ENCODE measurements at regions of chr17 and their contacts with region 1.

Region 1: GRCh38 chr17:7351665-7352501 is at the start of gene KCTD11:
- DNase-seq: peak; percentile 76
- H3K4me3 Mint-ChIP-seq: peak within 1 kb of the TSS; percentile 64
- H3K27ac Mint-ChIP-seq: peak within 1 kb of the TSS; percentile 84
- H3K4me1 Mint-ChIP-seq: peaks cover 70% of the 10 kb centered on the region
- H3K27me3 Mint-ChIP-seq: no peaks in the 10 kb centered on the region
- total RNA-seq, gene KCTD11: 11.2 to 12.5 TPM

Region 2: DNA sequence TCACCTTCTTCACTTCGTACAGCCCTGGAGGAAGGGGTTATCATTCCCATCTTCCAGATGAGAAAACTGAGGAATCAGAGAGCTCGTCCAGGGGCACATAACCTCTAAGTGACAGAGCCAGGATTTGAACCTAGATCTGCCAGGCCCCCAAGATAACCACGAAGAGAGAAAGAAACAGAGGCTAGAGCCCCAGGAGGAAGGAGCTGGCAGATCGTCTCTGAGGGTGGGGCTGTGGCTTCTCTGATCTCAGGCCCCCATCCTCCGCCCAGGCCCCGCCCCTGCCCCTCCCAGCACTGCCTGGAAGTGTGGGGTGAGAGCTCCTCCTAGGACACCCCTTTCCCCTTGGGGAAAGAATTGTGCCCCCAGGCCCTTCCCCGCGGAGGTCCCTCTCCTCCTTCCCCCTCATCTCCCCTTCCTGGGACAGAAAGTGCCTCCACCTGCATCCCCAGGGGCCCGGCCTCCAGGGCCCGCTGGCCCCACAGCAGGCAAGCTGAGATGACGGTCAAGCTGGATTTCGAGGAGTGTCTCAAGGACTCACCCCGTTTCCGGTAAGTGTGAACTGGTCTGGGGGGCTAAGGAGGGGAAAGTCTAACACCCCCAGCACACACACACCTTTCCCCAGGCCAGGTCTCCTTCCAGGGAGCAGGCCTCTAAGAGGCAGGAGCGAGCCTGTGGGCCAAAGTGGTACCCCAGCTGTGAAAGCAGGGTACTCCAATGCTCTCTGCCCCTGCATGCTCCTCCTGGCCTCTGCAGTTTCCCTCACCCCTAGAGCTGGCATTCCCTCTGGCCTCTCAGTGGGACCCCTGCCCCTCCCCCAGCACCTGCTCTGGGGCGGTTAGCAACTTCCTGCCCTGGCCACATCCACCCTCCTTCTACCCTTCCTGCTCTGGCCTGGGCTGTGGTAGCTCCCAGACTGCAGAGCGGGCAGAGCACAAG is 15.4 kb before region 1 on chr17 and contains the start of gene ACAP1:
- CTCF ChIA-PET with region 1: interaction called, 29 read pairs
- POLR2A ChIA-PET with region 1: interaction called, 4 read pairs
- DNase-seq: peak; percentile 94
- H3K4me3 Mint-ChIP-seq: peak within 1 kb of the TSS; percentile 91
- H3K27ac Mint-ChIP-seq: peak within 1 kb of the TSS; percentile 97
- H3K4me1 Mint-ChIP-seq: peaks cover 66% of the 10 kb centered on the region
- H3K27me3 Mint-ChIP-seq: no peaks in the 10 kb centered on the region
- total RNA-seq, gene ACAP1: 727 to 775 TPM

Region 3: GRCh38 chr17:7380321-7380720 is 28.4 kb after region 1 on chr17:
- CTCF ChIA-PET with region 1: interaction called, 17 read pairs
- POLR2A ChIA-PET with region 1: no interaction called
- DNase-seq: no peak
- H3K4me3 Mint-ChIP-seq: no peak overlapping the region
- H3K27ac Mint-ChIP-seq: no peak overlapping the region
- H3K4me1 Mint-ChIP-seq: peaks cover 21% of the 10 kb centered on the region
- H3K27me3 Mint-ChIP-seq: peaks cover 41% of the 10 kb centered on the region

Region 4: GRCh38 chr17:7403977-7404736 is 52.3 kb after region 1 on chr17 and contains the start of gene TMEM256:
- CTCF ChIA-PET with region 1: interaction called, 10 read pairs
- POLR2A ChIA-PET with region 1: no interaction called
- DNase-seq: peak; percentile 98
- H3K4me3 Mint-ChIP-seq: peak within 1 kb of the TSS; percentile 95
- H3K27ac Mint-ChIP-seq: peak within 1 kb of the TSS; percentile 95
- H3K4me1 Mint-ChIP-seq: peaks cover 28% of the 10 kb centered on the region
- H3K27me3 Mint-ChIP-seq: peaks cover 12% of the 10 kb centered on the region
- total RNA-seq, gene TMEM256: 47.2 to 48.3 TPM

Region 5: DNA sequence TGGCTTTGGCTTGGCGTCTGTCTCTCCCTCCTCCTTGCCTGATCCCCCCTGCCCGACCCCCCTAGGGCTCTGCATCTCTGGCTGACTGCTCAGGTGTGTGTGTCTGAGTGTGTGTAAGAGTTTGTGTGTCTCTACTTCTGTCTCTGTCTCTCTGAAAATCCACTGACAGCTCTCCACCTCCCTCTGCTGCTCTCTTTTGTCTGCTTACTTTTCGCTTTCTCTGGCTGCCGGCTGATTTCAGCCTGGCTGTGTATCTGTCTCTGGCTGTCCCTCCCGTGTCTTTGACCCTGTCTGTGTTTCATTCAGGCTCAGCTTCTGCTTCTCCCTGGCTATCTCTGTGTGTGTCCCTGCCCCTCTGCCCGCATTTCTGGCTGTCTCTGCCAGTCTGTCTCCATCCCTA is 64.4 kb after region 1 on chr17:
- CTCF ChIA-PET with region 1: no interaction called
- POLR2A ChIA-PET with region 1: no interaction called
- DNase-seq: no peak
- H3K4me3 Mint-ChIP-seq: no peak overlapping the region
- H3K27ac Mint-ChIP-seq: peak overlapping the region; percentile 34
- H3K4me1 Mint-ChIP-seq: no peaks in the 10 kb centered on the region
- H3K27me3 Mint-ChIP-seq: no peaks in the 10 kb centered on the region

Region 6: DNA sequence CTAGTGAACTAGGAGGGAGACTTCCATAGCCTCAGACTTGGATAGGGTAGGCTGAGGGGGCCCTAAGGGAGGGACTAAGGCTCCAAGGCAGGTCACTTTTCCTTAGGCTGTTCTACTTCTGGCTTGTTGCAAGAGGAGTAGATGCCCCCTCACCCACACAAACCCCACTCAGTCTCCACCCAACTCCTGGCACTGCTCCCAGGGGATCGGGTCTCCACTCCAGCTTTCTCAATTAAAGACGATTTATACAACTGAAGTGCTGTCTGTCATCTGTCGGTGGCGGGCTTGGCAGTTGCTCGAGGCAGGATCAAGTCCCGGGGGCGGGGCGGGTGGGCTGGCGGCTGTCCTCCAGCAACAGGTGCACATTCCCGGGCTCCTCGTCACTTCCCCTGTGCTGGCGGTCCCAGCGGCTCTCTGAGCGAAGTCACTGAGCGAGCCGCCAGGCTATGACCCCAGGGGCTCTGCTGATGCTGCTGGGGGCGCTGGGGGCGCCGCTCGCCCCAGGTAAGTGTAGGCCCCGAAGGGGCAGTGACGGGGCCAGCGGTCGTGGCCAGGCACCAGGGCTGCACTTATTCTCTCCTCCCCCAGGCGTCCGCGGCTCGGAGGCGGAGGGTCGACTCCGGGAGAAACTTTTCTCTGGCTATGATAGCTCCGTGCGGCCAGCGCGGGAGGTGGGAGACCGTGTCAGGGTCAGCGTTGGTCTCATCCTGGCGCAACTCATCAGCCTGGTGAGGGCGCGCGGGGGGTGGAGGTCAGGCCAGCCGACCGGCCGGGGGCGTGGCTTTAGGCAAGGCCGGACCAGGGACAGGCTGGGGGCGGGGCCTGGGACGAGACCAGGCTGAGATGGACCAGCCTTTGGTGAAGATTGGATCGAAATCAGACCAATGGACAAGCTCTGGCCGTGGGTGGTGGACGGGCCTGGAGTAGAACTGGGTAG is 93.1 kb after region 1 on chr17 and contains the start of gene CHRNB1:
- CTCF ChIA-PET with region 1: interaction called, 10 read pairs
- POLR2A ChIA-PET with region 1: no interaction called
- DNase-seq: no peak
- H3K4me3 Mint-ChIP-seq: peak within 1 kb of the TSS; percentile 72
- H3K27ac Mint-ChIP-seq: peak within 1 kb of the TSS; percentile 33
- H3K4me1 Mint-ChIP-seq: peaks cover 26% of the 10 kb centered on the region
- H3K27me3 Mint-ChIP-seq: peaks cover 55% of the 10 kb centered on the region
- total RNA-seq, gene CHRNB1: 18.8 to 19.2 TPM

Measured in activated CD4-positive, alpha-beta T cell treated with anti-CD3 and anti-CD28 coated beads, Interleukin-2, amount 10 ng/mL, durations not matched to agents 7 days and 5 days (primary cell).